Endothelial cell of umbilical vein (primary cell): ENCODE measurements at regions of chrX and their contacts with region 1.

Region 1: DNA sequence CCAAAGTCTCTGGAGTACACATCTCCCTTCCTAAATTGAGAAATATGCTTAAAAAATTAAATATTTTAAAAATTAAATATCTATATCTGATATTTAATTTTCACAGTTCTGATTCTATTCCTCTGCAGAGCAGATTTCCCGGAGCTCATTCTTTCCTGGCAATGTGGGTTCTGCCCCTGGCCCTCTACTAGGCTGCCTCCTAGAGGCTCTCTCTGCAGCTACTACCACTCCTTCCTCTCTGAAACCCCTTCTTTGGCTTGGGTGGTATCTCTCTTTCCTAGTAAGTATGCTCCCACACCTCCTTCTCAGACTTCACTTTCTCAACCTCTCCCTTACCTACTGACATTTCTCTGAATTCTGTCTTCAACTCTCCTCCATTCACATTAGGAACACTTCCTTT is 45.3 kb downstream of the RPGR start:
- DNase-seq: peak; percentile 8
- H3K4me3 ChIP-seq: no peak overlapping the region
- H3K27ac ChIP-seq: no peak overlapping the region
- H3K4me1 ChIP-seq: peaks cover 3% of the 10 kb centered on the region
- H3K27me3 ChIP-seq: no peaks in the 10 kb centered on the region
- CTCF ChIP-seq: peak; percentile 5 to 42
- POLR2A ChIP-seq: no peak

Region 2: DNA sequence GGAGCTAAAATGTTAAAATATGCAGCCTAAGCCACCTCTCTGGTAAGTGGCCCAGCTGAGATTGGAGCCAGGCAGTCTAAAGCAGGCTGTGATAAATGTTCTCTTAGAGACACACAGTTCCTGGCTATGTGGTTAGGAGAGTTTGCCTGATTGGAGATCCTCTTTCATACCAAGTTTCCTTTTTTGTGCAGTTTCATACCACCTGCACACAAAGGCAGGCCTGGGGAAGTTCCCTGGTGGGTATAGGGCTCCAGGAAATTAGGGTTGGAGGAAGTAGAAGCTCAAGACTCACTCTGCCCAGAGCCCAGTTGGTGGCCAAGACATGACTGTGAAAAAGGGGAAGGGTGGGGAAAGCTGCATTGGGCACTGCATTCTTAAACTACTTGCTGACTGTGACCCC is 485.2 kb before region 1 on chrX:
- CTCF ChIA-PET with region 1: no interaction called
- POLR2A ChIA-PET with region 1: no interaction called
- dilution Hi-C with region 1: no loop called
- intact Hi-C with region 1: no loop called
- DNase-seq: no peak
- H3K4me3 ChIP-seq: no peak overlapping the region
- H3K27ac ChIP-seq: no peak overlapping the region
- H3K4me1 ChIP-seq: no peaks in the 10 kb centered on the region
- H3K27me3 ChIP-seq: peaks cover 0 to 3% of the 10 kb centered on the region in 2 experiments
- CTCF ChIP-seq: no peak
- POLR2A ChIP-seq: no peak

Region 3: DNA sequence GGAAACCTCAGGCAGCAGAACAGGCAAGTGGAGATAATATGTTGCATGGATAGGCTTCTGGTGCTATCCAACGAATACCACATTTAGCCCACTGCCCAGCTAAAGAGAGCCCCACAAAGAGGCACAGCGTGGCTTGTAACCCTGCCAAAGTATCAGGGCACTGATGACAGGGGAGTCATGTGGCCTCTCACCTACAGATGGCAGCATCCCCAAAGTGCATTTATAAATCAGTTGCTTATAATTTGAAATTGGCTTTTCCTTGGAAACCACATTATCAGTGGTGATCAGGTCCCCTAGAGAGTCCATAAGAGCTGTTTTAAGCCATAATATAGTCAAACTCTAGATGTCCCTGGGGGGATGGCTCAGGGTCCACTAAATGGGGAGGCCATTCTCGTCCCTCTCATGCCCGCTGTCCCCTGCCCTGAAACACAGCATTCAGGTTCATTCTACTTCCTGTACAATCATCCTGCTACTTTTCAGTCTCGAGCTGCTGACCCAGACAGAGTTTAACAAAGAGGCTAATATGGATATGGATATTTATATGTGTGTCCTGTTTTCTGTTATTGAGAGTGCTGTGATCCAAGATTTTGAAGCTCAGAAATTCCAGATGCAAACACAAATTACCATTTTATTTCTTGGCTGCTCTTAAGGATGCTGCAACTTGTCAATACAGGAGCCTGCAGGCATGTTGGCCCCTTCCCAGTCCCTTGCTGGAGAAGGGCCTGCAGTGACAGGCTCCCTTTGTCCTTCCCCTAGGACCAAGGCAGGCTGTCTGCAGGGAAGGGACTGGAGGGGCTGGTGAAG is 89.8 kb before region 1 on chrX:
- CTCF ChIA-PET with region 1: interaction called, 50 read pairs
- POLR2A ChIA-PET with region 1: no interaction called
- dilution Hi-C with region 1: no loop called
- intact Hi-C with region 1: no loop called
- DNase-seq: peak; percentile 29
- H3K4me3 ChIP-seq: no peak overlapping the region
- H3K27ac ChIP-seq: no peak overlapping the region
- H3K4me1 ChIP-seq: no peaks in the 10 kb centered on the region
- H3K27me3 ChIP-seq: no peaks in the 10 kb centered on the region
- CTCF ChIP-seq: peak; percentile 30 to 36
- POLR2A ChIP-seq: no peak

Region 4: DNA sequence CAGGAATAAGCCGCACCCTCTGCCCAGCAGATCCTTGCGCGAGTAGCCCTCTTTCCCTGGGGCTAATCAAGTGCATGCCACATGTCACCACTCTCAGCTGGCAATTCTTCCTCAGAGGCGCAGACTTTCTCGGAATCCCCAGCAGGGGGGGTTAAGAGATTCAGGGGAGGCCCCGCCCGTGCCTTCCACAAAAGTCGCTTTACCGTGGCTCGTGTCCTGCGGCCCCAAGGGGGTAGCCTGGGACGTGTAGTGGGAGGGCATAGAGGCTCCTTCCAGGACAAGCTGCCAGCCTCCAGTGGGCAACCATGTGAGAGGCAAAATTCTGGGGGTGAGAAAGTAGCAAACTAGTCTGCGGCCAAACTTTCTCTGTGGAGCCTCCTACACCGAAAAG is 62.0 kb before region 1 on chrX:
- CTCF ChIA-PET with region 1: interaction called, 14 read pairs
- POLR2A ChIA-PET with region 1: no interaction called
- dilution Hi-C with region 1: no loop called
- intact Hi-C with region 1: no loop called
- DNase-seq: peak; percentile 58
- H3K4me3 ChIP-seq: peak overlapping the region; percentile 28 to 63 (median 57)
- H3K27ac ChIP-seq: peak overlapping the region; percentile 5
- H3K4me1 ChIP-seq: peaks cover 18% of the 10 kb centered on the region
- H3K27me3 ChIP-seq: no peaks in the 10 kb centered on the region
- CTCF ChIP-seq: peak; percentile 14 to 47
- POLR2A ChIP-seq: no peak

Region 5: DNA sequence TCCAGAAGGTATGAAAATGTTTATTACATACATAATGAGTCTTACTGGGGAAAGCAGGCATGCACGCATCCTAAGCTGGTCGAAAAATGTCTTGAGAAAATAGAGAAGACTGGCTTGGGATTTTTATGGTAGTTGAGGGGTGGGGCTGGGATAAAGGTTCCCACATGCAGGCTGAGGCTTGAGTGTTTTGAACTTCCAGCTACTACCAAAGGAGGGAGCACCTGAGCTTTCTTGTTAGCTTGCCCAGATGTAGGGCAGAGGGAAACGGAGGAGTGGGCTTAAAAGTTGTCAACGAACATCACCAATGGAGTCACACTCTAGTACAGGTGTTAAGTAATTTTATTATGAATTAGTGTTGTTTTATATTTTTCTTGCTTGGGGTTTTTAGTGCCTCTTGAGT is 21.8 kb before region 1 on chrX:
- CTCF ChIA-PET with region 1: interaction called, 13 read pairs
- POLR2A ChIA-PET with region 1: no interaction called
- dilution Hi-C with region 1: no loop called
- intact Hi-C with region 1: no loop called
- DNase-seq: peak; percentile 35
- H3K4me3 ChIP-seq: no peak overlapping the region
- H3K27ac ChIP-seq: no peak overlapping the region
- H3K4me1 ChIP-seq: no peaks in the 10 kb centered on the region
- H3K27me3 ChIP-seq: no peaks in the 10 kb centered on the region
- CTCF ChIP-seq: peak; percentile 15 to 31
- POLR2A ChIP-seq: no peak